Esophagus muscularis mucosa (tissue), 4 donors: ENCODE measurements at regions of chr1 and their contacts with region 1.

Region 1: DNA sequence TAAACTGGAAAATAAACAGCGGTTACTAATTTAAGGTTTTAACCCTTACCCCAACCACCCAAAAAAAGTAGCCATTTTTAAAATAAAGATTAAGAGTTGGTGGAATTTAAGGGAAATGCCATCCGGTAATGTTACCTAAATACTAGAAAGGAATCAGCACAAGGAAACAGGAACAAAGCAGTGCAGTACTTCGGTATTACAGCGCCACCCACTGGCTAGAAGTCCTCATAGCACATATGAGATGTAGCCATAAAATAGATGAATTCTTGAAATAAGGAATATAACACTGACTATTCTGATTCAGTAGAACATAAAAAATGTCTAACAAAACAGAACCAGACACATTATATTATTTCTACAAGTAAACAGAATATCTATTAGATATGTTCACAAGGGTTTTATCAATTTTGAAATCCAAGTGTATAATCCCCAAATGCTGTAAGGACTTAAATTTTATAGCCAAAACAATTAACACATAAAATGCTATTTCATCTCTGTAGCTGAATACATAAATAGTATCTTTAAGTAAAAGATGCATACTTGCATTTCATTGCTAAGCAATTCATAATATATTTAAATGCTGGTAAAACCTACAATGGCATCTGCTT is 58.8 kb downstream of the FRRS1 start:
- DNase-seq: no peak
- H3K4me3 ChIP-seq: no peak overlapping the region
- H3K27ac ChIP-seq: no peak overlapping the region
- H3K4me1 ChIP-seq: peaks cover 0 to 6% (median 3%) of the 10 kb centered on the region in 4 donors
- H3K27me3 ChIP-seq: no peaks in the 10 kb centered on the region
- CTCF ChIP-seq: peak; percentile 81 to 88 (median 88)
- EP300 ChIP-seq: no peak
- POLR2A ChIP-seq: no peak

Region 2: GRCh38 chr1:99481391-99481996 is 226.1 kb before region 1 on chr1:
- intact Hi-C with region 1: loop called (anchors 5 kb)
- DNase-seq: no peak
- H3K4me3 ChIP-seq: no peak overlapping the region
- H3K27ac ChIP-seq: no peak overlapping the region
- H3K4me1 ChIP-seq: no peaks in the 10 kb centered on the region
- H3K27me3 ChIP-seq: no peaks in the 10 kb centered on the region
- CTCF ChIP-seq: peak; percentile 69 to 76 (median 69)
- EP300 ChIP-seq: no peak
- POLR2A ChIP-seq: no peak

Region 3: GRCh38 chr1:99906535-99906934 is 198.9 kb after region 1 on chr1:
- intact Hi-C with region 1: no loop called
- DNase-seq: no peak
- H3K4me3 ChIP-seq: no peak overlapping the region
- H3K27ac ChIP-seq: no peak overlapping the region
- H3K4me1 ChIP-seq: no peaks in the 10 kb centered on the region
- H3K27me3 ChIP-seq: no peaks in the 10 kb centered on the region
- CTCF ChIP-seq: no peak
- EP300 ChIP-seq: no peak
- POLR2A ChIP-seq: no peak